GM12878 (cell line): ENCODE measurements at regions of chr4 and their contacts with region 1.

Region 1: DNA sequence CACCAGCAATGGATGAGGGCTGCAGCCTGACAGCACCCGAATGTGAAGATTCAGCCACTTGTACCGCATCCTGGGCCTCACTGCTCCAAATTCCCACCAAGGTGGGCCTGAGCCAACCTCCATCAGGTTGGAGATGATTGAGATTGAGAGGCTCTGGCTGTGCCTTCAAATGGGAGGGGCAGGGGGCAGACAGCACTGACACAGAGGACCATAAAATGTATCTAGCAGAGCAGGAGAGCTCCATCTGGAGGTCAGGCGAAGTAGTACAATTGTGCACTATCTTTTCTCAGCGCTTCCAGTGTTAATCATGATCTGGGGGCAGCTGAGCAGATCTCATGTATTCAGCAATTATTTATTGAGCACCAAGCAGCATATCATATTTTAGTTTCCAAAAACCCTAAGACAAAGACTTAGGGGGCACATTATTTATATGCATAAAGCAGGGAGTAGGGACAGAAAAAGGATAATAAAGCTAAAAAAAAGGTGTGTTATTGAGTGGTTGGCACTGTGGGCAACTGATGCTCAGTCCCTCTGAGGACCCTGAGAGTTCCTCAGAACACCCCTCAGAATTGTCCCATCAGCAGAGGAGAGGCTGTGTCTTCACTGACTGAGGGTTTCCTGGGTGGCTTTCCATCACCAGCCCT is 31.6 kb upstream of the C1QTNF7 start:
- DNase-seq: no peak
- ATAC-seq: peak; percentile 95
- H3K4me3 ChIP-seq: no peak overlapping the region
- H3K27ac ChIP-seq: no peak overlapping the region
- H3K4me1 ChIP-seq: peaks cover 8% of the 10 kb centered on the region
- H3K27me3 ChIP-seq: no peaks in the 10 kb centered on the region
- CTCF ChIP-seq: peak; percentile 78 to 82 (median 82)
- EP300 ChIP-seq: no peak
- POLR2A ChIP-seq: no peak
- RAD21 ChIP-seq: peak; percentile 74

Region 2: GRCh38 chr4:15238720-15239119 is 157.6 kb before region 1 on chr4:
- CTCF ChIA-PET with region 1: interaction called, 41 read pairs
- POLR2A ChIA-PET with region 1: no interaction called
- RAD21 ChIA-PET with region 1: interaction called, 6 read pairs
- SMC1A ChIA-PET with region 1: interaction called, 10 read pairs
- in situ Hi-C with region 1: loop called (anchors 5 kb)
- intact Hi-C with region 1: loop called (anchors 1 kb)
- DNase-seq: no peak
- ATAC-seq: peak; percentile 83
- H3K4me3 ChIP-seq: no peak overlapping the region
- H3K27ac ChIP-seq: no peak overlapping the region
- H3K4me1 ChIP-seq: peaks cover 2% of the 10 kb centered on the region
- H3K27me3 ChIP-seq: no peaks in the 10 kb centered on the region
- CTCF ChIP-seq: peak; percentile 60 to 78 (median 60); a peak in 5 of 6 replicates
- EP300 ChIP-seq: no peak
- POLR2A ChIP-seq: no peak
- RAD21 ChIP-seq: peak; percentile 81

Region 3: DNA sequence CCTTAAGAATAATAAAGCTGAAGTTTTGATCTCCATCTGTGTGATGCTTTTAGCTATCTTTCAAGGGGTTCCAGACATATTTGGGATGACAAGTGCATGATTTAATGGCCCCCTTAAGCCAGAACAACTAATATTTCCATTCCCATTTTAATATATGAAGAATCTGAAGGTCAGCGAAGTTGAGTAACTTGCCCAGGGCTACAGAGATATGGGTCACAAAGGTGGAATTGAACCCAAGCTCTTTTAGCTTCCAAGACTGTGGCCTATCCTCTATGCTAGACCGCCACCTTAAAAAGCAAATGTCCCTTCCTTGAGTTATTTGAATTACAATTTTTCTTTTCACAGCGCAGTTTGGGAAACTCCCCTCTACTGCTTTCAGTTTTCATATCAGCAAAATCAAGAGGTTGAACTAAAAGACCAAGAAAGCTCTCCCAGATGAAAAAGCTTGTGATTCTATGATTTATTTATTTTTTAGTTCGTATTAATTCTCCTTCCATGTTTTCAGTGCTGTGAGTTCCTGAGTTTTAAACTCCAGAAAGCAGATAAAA is 143.0 kb before region 1 on chr4:
- CTCF ChIA-PET with region 1: interaction called, 10 read pairs
- POLR2A ChIA-PET with region 1: no interaction called
- RAD21 ChIA-PET with region 1: no interaction called
- SMC1A ChIA-PET with region 1: interaction called, 3 read pairs
- in situ Hi-C with region 1: no loop called
- intact Hi-C with region 1: no loop called
- DNase-seq: peak; percentile 13
- ATAC-seq: peak; percentile 94
- H3K4me3 ChIP-seq: no peak overlapping the region
- H3K27ac ChIP-seq: no peak overlapping the region
- H3K4me1 ChIP-seq: peaks cover 6% of the 10 kb centered on the region
- H3K27me3 ChIP-seq: no peaks in the 10 kb centered on the region
- CTCF ChIP-seq: no peak
- EP300 ChIP-seq: no peak
- POLR2A ChIP-seq: no peak
- RAD21 ChIP-seq: no peak

Region 4: GRCh38 chr4:15378062-15378461 is 18.2 kb before region 1 on chr4:
- CTCF ChIA-PET with region 1: interaction called, 12 read pairs
- POLR2A ChIA-PET with region 1: no interaction called
- RAD21 ChIA-PET with region 1: no interaction called
- SMC1A ChIA-PET with region 1: no interaction called
- in situ Hi-C with region 1: no loop called
- intact Hi-C with region 1: no loop called
- DNase-seq: no peak
- ATAC-seq: no peak
- H3K4me3 ChIP-seq: no peak overlapping the region
- H3K27ac ChIP-seq: no peak overlapping the region
- H3K4me1 ChIP-seq: no peaks in the 10 kb centered on the region
- H3K27me3 ChIP-seq: no peaks in the 10 kb centered on the region
- CTCF ChIP-seq: no peak
- EP300 ChIP-seq: no peak
- POLR2A ChIP-seq: no peak
- RAD21 ChIP-seq: no peak